ENCODE measurements at regions of chr20 and their contacts with region 1.

Region 1: DNA sequence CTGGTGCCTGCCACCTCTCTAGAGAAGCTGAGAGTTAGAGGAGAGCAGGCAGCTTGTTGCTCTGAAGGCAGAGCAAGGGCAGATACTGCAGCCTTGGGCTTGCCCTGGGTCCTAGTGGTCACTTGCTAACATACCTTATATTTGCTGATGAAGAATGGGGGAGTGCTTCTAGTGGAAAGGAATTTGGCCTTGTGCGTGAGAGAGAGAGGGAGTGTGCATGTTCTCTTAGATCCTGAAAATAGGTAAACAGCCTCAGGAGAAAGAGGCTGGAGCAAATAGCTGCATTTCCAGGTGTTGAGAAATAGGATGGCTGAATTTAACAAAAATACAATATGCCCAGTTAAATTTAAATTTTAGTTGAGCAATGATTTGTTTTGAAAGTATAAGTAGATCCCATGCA is 724.5 kb upstream of the FLRT3 start:
- DNase-seq: peak; percentile 76
- H3K4me3 Mint-ChIP-seq: peak overlapping the region; percentile 0
- H3K27ac Mint-ChIP-seq: peak overlapping the region; percentile 5
- H3K4me1 Mint-ChIP-seq: peaks cover 26% of the 10 kb centered on the region
- H3K27me3 Mint-ChIP-seq: no peaks in the 10 kb centered on the region
- CTCF ChIP-seq: no peak

Region 2: DNA sequence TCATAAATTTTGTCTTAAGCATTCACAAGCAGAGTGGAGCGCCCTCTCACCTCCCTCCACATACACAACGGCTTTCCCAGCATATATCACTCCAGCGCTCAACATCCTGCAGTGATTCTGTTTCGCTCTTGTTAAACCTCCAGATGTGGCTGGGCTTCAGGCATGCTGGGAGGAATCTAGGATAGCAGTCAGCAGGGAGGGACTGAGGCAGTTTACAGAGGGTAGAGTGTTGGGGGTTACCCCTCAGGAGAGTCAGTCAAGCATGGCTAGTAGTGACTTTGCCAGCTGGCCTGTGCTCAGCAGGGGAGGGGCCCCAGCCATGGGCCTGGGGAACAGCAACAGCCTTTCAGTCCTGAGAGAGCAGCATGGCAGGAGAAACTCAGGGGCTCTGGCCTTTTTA is 563.2 kb before region 1 on chr20:
- CTCF ChIA-PET with region 1: no interaction called
- POLR2A ChIA-PET with region 1: no interaction called
- intact Hi-C with region 1: no loop called
- DNase-seq: no peak
- H3K4me3 Mint-ChIP-seq: no peak overlapping the region
- H3K27ac Mint-ChIP-seq: no peak overlapping the region
- H3K4me1 Mint-ChIP-seq: no peaks in the 10 kb centered on the region
- H3K27me3 Mint-ChIP-seq: no peaks in the 10 kb centered on the region
- CTCF ChIP-seq: no peak

Region 3: DNA sequence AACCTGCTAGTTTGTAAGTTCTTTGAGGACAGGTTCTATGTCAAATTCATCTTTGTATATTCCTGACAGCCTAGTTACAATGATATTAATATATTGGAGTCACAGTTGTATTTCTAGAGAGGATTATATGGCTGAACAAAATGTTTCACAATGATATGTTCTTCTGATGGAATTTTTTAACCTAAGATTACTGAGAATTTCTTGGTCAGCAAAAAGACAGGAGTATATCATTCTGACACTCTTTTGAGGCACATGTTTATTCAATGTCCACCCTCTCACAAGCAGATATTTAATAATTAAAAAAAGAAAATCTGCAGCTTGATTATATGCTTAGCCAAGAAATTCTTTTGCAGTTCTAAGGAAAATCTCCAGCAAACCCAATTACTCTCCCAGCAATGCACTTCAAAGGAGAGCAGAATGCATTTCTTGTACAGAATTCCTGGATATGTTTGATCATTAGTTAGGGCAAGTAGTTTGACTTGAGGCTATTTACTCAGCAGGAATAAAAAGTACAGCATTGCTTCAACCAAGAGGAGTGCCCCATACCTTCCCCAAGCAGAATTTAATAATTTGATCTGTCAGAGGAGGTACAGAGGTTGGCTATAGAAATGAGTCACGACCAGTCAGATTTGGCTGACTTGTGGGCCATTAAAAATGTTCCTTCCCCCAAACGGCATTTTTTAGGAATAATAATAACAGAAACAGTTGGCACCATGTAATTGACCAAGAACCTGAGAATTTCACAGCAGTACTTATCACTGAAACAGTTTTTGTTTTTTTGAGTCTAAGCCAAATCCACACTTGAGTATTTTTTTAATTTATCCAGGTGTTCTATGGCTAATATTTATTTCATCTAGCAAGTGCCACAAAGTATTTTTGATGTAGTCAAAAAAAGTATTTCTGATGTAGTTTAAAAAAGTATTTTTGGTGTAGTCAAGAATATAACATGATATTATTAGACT is 216.5 kb before region 1 on chr20:
- CTCF ChIA-PET with region 1: interaction called, 3 read pairs
- POLR2A ChIA-PET with region 1: interaction called, 21 read pairs
- intact Hi-C with region 1: no loop called
- DNase-seq: peak; percentile 76
- H3K4me3 Mint-ChIP-seq: peak overlapping the region; percentile 1
- H3K27ac Mint-ChIP-seq: peak overlapping the region; percentile 82
- H3K4me1 Mint-ChIP-seq: peaks cover 13% of the 10 kb centered on the region
- H3K27me3 Mint-ChIP-seq: no peaks in the 10 kb centered on the region
- CTCF ChIP-seq: no peak

Region 4: GRCh38 chr20:14948423-14948822 is 113.5 kb before region 1 on chr20:
- CTCF ChIA-PET with region 1: no interaction called
- POLR2A ChIA-PET with region 1: interaction called, 16 read pairs
- intact Hi-C with region 1: no loop called
- DNase-seq: peak; percentile 14
- H3K4me3 Mint-ChIP-seq: no peak overlapping the region
- H3K27ac Mint-ChIP-seq: no peak overlapping the region
- H3K4me1 Mint-ChIP-seq: peaks cover 14% of the 10 kb centered on the region
- H3K27me3 Mint-ChIP-seq: no peaks in the 10 kb centered on the region
- CTCF ChIP-seq: peak; percentile 24

Region 5: DNA sequence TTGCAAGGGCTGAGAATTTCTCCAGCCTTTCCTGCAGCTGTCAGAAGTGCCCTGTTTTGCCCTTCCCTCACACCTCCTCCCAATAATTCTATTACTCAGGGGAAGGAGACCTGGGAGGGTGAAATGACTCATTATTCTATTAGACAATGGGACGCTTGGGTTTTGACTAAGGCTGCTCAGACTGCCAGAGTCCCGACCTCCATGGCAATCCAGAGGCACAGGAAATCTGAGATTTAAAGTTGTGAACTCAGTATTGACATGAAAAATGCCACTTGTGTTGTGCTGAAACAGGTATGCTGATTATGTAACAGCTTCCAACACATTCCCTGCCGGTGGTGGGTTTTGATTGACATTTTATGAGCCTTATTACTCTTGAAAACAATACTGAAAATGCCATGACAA is 98.7 kb before region 1 on chr20:
- CTCF ChIA-PET with region 1: interaction called, 4 read pairs
- POLR2A ChIA-PET with region 1: interaction called, 22 read pairs
- intact Hi-C with region 1: no loop called
- DNase-seq: peak; percentile 87
- H3K4me3 Mint-ChIP-seq: no peak overlapping the region
- H3K27ac Mint-ChIP-seq: peak overlapping the region; percentile 57
- H3K4me1 Mint-ChIP-seq: peaks cover 35% of the 10 kb centered on the region
- H3K27me3 Mint-ChIP-seq: no peaks in the 10 kb centered on the region
- CTCF ChIP-seq: no peak

Region 6: GRCh38 chr20:14997635-14998185 is 64.2 kb before region 1 on chr20:
- CTCF ChIA-PET with region 1: interaction called, 4 read pairs
- POLR2A ChIA-PET with region 1: interaction called, 26 read pairs
- intact Hi-C with region 1: no loop called
- DNase-seq: peak; percentile 90
- H3K4me3 Mint-ChIP-seq: no peak overlapping the region
- H3K27ac Mint-ChIP-seq: peak overlapping the region; percentile 54
- H3K4me1 Mint-ChIP-seq: peaks cover 21% of the 10 kb centered on the region
- H3K27me3 Mint-ChIP-seq: no peaks in the 10 kb centered on the region
- CTCF ChIP-seq: no peak

Region 7: DNA sequence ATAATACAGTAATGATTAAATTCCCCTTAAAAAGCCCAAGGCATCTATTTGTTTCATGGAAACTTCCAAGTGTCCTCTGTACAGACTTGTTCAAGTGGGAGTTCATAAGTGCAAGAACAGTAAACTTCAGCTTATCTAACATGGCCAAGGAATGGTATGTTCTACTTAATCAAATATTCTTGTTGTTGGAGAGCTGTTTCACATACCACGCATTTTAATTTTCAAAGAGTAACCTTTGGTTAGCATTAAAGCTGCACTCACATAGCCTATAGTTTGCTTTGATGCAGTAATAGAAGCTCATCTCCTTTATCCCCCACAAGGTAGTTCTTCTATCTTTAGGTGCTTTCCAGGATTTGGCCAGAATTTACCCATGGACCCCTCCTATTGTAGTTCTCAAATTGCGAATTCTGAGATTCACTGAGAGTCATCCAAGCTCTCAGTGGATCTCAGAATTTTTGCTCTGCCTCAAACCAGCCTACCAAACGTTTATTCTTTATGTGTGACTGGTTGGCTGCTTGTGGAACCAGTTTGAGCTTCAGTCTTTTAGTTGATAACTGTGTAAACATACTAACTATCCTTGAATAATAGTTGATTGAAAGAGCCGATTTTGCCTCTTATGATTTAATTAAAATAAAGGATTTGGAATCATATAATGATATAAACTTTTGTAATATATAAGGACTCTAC is 56.5 kb before region 1 on chr20:
- CTCF ChIA-PET with region 1: interaction called, 4 read pairs
- POLR2A ChIA-PET with region 1: interaction called, 15 read pairs
- intact Hi-C with region 1: no loop called
- DNase-seq: no peak
- H3K4me3 Mint-ChIP-seq: no peak overlapping the region
- H3K27ac Mint-ChIP-seq: no peak overlapping the region
- H3K4me1 Mint-ChIP-seq: no peaks in the 10 kb centered on the region
- H3K27me3 Mint-ChIP-seq: no peaks in the 10 kb centered on the region
- CTCF ChIP-seq: no peak

Region 8: DNA sequence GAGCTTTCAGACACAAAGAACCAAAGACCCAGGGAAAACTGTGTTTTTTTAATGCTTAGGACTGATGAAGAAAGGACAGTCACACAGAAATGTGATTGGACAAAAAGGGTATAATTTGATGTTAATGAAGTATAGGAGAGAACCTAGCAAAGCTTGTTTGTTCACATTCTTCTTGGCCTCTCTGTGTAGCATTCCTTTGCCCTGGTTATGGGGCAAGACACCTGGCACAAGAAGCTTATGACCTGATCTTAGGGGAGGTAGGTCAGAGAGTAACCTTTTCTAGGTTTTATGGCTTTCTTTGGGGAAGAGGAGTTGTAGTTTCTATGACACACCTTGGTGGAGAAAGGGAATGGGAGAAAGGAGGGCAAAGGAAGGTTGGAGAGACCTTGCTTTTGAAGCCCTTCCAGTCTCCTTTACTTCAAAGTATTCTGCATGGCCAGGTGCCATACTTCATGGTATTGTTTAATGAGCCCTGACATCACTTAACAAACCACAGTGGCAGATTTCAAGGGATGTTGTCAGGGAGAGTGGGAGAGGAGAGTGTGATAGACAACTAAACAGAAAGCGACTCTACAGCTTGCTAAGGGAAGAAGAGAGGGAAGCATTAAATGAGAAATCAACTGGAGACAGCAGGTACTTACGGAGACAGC is 22.7 kb before region 1 on chr20:
- CTCF ChIA-PET with region 1: interaction called, 40 read pairs
- POLR2A ChIA-PET with region 1: interaction called, 231 read pairs
- intact Hi-C with region 1: no loop called
- DNase-seq: peak; percentile 50
- H3K4me3 Mint-ChIP-seq: no peak overlapping the region
- H3K27ac Mint-ChIP-seq: peak overlapping the region; percentile 60
- H3K4me1 Mint-ChIP-seq: peaks cover 18% of the 10 kb centered on the region
- H3K27me3 Mint-ChIP-seq: no peaks in the 10 kb centered on the region
- CTCF ChIP-seq: no peak